GM12878 (cell line): ENCODE measurements at regions of chr1 and their contacts with region 1.

Region 1: DNA sequence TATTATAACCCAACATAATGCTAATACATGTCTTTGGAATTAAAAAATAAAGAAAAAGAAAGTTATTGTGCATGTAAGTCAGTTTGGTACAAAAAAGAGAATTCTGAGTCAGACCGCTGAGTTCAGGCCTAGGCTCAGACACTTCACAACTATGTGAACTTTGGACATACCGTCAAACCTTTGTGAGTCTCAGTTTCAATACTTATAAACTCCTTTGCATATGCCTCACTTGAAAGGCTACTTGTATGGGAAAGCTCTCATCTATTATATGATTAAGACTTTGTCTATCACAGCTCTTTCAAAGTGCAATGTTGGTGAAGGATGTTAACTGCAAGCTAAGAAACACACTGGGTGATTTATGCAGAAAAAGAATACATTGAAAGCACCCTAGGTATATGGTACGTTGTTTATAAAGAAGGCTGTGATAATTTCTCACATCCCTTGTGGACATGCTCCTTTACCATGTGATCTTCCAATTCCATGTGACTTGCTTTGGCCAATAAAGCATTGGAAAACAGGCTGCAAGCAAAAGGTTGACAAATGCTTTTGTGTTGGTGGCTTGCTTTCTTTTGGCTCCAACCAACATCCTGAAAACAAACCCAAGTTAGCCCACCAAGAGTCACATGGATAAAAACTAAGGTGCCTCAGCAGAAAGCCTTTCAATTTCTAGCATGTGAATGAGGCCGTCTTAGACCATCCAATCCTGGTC is 49.6 kb downstream of the INTS7 start:
- DNase-seq: peak; percentile 82
- ATAC-seq: peak; percentile 99
- H3K4me3 ChIP-seq: no peak overlapping the region
- H3K27ac ChIP-seq: peak overlapping the region; percentile 88
- H3K4me1 ChIP-seq: peaks cover 16% of the 10 kb centered on the region
- H3K27me3 ChIP-seq: no peaks in the 10 kb centered on the region
- CTCF ChIP-seq: no peak
- EP300 ChIP-seq: peak in 1 of 2 experiments; percentile 52; a peak in 1 of 4 replicates
- POLR2A ChIP-seq: no peak; the same call in 1 of the 2 replicates
- RAD21 ChIP-seq: no peak

Region 2: GRCh38 chr1:211527006-211527405 is 458.7 kb before region 1 on chr1:
- CTCF ChIA-PET with region 1: no interaction called
- POLR2A ChIA-PET with region 1: no interaction called
- RAD21 ChIA-PET with region 1: no interaction called
- SMC1A ChIA-PET with region 1: no interaction called
- in situ Hi-C with region 1: no loop called
- intact Hi-C with region 1: no loop called
- DNase-seq: no peak
- ATAC-seq: peak; percentile 94
- H3K4me3 ChIP-seq: no peak overlapping the region
- H3K27ac ChIP-seq: peak overlapping the region; percentile 14; the same call in 1 of the 2 replicates
- H3K4me1 ChIP-seq: peaks cover 35% of the 10 kb centered on the region
- H3K27me3 ChIP-seq: no peaks in the 10 kb centered on the region
- CTCF ChIP-seq: no peak
- EP300 ChIP-seq: no peak
- POLR2A ChIP-seq: no peak
- RAD21 ChIP-seq: no peak

Region 3: GRCh38 chr1:211944733-211945500 is 40.8 kb before region 1 on chr1:
- CTCF ChIA-PET with region 1: no interaction called
- POLR2A ChIA-PET with region 1: interaction called, 17 read pairs
- RAD21 ChIA-PET with region 1: interaction called, 57 read pairs
- SMC1A ChIA-PET with region 1: interaction called, 49 read pairs
- in situ Hi-C with region 1: no loop called
- intact Hi-C with region 1: no loop called
- DNase-seq: no peak
- ATAC-seq: no peak
- H3K4me3 ChIP-seq: no peak overlapping the region
- H3K27ac ChIP-seq: no peak overlapping the region
- H3K4me1 ChIP-seq: peaks cover 8% of the 10 kb centered on the region; the same call in 1 of the 2 replicates
- H3K27me3 ChIP-seq: no peaks in the 10 kb centered on the region
- CTCF ChIP-seq: no peak
- EP300 ChIP-seq: no peak
- POLR2A ChIP-seq: no peak
- RAD21 ChIP-seq: no peak

Region 4: GRCh38 chr1:212012034-212012740 is 26.5 kb after region 1 on chr1:
- CTCF ChIA-PET with region 1: interaction called, 5 read pairs
- POLR2A ChIA-PET with region 1: no interaction called
- RAD21 ChIA-PET with region 1: interaction called, 5 read pairs
- SMC1A ChIA-PET with region 1: interaction called, 13 read pairs
- in situ Hi-C with region 1: no loop called
- intact Hi-C with region 1: no loop called
- DNase-seq: peak; percentile 38
- ATAC-seq: peak; percentile 100
- H3K4me3 ChIP-seq: no peak overlapping the region
- H3K27ac ChIP-seq: no peak overlapping the region
- H3K4me1 ChIP-seq: no peaks in the 10 kb centered on the region
- H3K27me3 ChIP-seq: no peaks in the 10 kb centered on the region
- CTCF ChIP-seq: peak; percentile 95 to 100 (median 98)
- EP300 ChIP-seq: no peak
- POLR2A ChIP-seq: no peak
- RAD21 ChIP-seq: peak; percentile 97

Region 5: DNA sequence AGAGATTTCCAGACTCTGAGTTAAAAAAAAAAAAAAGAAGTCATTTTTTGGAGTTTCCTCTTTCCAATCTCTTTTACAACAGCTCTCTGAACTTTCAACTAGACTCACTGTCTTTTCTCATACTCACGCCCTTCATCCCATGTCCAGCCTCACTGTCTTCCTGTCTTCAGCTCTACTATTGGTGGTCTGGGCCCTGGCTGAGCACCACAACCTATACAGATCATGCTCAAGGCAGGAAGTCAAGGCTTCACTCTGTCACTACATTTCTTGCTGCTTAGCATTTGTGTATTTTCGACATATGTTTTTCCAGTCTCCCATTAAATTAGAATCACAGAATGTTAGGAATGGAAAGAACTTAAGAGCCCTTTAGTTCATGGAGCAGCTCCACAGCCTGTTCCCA is 193.1 kb after region 1 on chr1:
- CTCF ChIA-PET with region 1: no interaction called
- POLR2A ChIA-PET with region 1: no interaction called
- RAD21 ChIA-PET with region 1: no interaction called
- SMC1A ChIA-PET with region 1: no interaction called
- in situ Hi-C with region 1: no loop called
- intact Hi-C with region 1: no loop called
- DNase-seq: no peak
- ATAC-seq: no peak
- H3K4me3 ChIP-seq: no peak overlapping the region
- H3K27ac ChIP-seq: no peak overlapping the region
- H3K4me1 ChIP-seq: no peaks in the 10 kb centered on the region
- H3K27me3 ChIP-seq: no peaks in the 10 kb centered on the region
- CTCF ChIP-seq: no peak
- EP300 ChIP-seq: no peak
- POLR2A ChIP-seq: no peak
- RAD21 ChIP-seq: no peak